CD4-positive, alpha-beta memory T cell (primary cell): ENCODE measurements at regions of chr11 and their contacts with region 1.

Region 1: DNA sequence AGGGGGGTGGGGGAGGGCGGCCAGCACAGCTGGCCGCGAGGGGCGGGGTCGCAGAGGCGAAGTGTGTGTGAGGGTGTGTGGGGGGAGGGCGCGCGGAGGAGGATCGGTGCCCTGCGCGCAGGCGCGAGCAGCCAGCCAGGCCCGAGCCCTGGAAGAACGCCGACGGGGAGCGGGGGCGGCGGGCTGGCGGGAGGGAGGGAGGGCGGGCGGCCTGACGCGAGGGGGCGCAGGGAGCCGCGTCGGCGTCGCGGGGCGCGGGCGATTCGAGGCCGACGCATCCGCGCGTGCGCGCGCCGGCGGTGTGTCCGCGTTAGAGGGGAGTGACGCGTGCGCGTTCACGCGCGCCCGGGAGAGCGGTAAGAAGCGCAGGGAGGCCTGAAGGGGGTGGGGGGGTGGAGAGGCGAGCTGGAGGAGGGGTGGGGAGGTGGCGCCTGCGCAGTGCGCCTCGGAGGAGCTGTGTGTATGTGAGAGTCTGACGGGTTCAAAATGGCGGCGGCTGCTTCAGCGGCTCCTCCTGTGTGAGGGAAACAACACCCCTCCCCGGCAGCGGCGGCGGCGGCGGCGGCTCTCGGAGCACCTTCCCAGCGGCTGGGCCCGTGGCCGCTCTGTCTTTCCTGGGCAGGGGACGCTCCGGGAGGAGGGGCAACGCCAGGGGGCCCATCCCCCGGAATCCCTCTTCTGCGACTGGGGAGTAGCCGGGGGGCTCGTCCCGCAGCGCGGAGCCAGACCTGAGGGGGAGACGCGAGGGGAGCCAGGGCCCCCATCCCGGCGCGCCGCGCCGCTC is at the start of gene KDM2A:
- DNase-seq: peak; percentile 96 to 100 (median 98)
- H3K4me3 ChIP-seq: peak within 1 kb of the TSS; percentile 60 to 97
- H3K4me3 Mint-ChIP-seq: peak within 1 kb of the TSS; percentile 94 to 99 (median 97)
- H3K27ac ChIP-seq: peak within 1 kb of the TSS; percentile 76
- H3K27ac Mint-ChIP-seq: peak within 1 kb of the TSS; percentile 89 to 98 (median 96)
- H3K4me1 ChIP-seq: peaks cover 31% of the 10 kb centered on the region
- H3K4me1 Mint-ChIP-seq: peaks cover 13 to 40% (median 27%) of the 10 kb centered on the region in 4 donors
- H3K27me3 ChIP-seq: no peaks in the 10 kb centered on the region
- H3K27me3 Mint-ChIP-seq: no peaks in the 10 kb centered on the region
- total RNA-seq, gene KDM2A: 193 to 200 TPM

Region 2: GRCh38 chr11:66251809-66252208 is 867.2 kb before region 1 on chr11:
- CTCF ChIA-PET with region 1: no interaction called
- POLR2A ChIA-PET with region 1: no interaction called
- intact Hi-C with region 1: no loop called
- DNase-seq: no peak
- H3K4me3 ChIP-seq: no peak overlapping the region
- H3K4me3 Mint-ChIP-seq: peak overlapping the region in 1 of 8 donors; percentile 39
- H3K27ac ChIP-seq: no peak overlapping the region
- H3K27ac Mint-ChIP-seq: peak overlapping the region in 4 of 7 donors; percentile 29 to 58 (median 46)
- H3K4me1 ChIP-seq: peaks cover 10% of the 10 kb centered on the region
- H3K4me1 Mint-ChIP-seq: peaks cover 10 to 31% (median 20%) of the 10 kb centered on the region in 4 donors
- H3K27me3 ChIP-seq: no peaks in the 10 kb centered on the region
- H3K27me3 Mint-ChIP-seq: no peaks in the 10 kb centered on the region

Region 3: DNA sequence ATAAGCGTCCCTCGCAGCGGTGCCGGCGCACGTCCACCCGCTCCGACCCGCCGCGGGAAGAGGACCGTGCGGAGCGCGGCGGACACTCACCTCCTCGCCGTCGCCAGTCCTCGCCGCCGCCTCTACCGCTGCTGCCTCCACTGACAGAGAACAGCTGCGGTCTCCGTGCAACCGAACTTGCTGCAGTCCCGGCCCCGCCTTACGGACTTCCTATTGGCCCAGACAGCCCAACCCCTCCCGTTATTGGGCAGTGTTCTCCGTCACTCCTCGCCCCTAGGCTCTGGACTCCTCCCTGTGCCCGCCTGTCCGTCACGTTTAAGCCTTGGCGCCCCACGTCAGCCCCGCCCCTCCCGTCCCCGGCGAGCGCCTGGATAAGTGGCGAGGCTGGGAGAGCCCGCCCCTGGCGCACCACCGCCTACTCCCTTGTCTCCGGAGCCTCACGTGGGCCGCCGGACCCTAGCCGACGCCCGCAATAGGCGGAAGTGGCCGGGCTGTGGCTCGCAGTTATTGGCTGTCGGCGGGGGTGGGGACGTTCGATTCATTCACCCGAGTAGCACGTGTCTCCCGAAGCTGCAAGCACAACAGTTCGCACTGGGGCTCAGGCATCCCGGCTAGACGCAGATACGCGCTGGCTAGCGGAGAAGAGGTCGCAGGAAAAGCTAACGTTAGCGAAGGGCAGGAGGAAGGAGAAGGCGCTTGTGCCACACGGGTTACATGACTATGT is 160.6 kb before region 1 on chr11 and contains the start of gene PC:
- CTCF ChIA-PET with region 1: no interaction called
- POLR2A ChIA-PET with region 1: interaction called, 3 read pairs
- intact Hi-C with region 1: loop called (anchors 5 kb)
- DNase-seq: peak; percentile 96 to 99 (median 98)
- H3K4me3 ChIP-seq: peak within 1 kb of the TSS; percentile 76 to 77
- H3K4me3 Mint-ChIP-seq: peak within 1 kb of the TSS; percentile 87 to 93 (median 92)
- H3K27ac ChIP-seq: peak within 1 kb of the TSS; percentile 19
- H3K27ac Mint-ChIP-seq: peak within 1 kb of the TSS; percentile 56 to 94 (median 88)
- H3K4me1 ChIP-seq: peaks cover 21% of the 10 kb centered on the region
- H3K4me1 Mint-ChIP-seq: peaks cover 15 to 38% (median 16%) of the 10 kb centered on the region in 4 donors
- H3K27me3 ChIP-seq: no peaks in the 10 kb centered on the region
- H3K27me3 Mint-ChIP-seq: peaks cover 0 to 1% of the 10 kb centered on the region in 2 donors
- total RNA-seq, gene PC: 7.6 to 7.7 TPM

Region 4: DNA sequence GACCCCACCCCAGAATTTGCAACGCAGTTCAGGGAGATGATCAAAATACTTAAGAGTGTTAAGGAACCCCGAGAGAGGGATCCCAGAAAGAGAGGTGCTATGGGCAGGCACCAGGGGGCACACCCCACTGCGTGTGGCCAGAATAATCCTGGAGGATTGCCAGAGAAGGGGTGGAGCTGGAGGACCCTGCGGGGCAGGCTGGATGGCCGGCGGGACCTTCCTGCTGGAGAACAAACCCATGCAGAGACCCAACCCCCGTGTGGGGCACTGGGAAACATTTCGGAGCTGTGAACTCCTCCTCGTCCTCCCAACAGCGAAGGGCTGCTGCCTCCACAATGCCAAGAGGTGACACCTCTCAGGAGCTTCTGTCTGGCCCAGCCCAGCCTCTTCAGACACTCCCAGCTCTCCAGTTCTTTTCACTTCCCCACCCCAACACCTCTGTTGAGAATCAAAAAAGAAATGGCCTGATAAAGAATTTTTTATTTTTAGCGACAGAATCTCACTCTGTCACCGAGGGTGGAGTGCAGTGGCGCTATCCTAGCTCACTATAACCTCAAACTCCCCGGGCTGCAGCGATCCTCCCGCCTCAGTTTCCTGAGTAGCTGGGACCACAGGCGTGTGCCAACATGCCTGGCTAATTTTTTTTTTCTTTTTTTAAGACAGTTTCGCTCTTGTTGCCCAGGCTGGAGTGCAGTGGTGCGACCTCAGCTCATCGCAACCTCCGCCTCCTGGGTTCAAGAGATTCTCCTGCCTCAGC is 36.8 kb before region 1 on chr11:
- CTCF ChIA-PET with region 1: interaction called, 6 read pairs
- POLR2A ChIA-PET with region 1: no interaction called
- intact Hi-C with region 1: loop called (anchors 1 kb)
- DNase-seq: no peak
- H3K4me3 ChIP-seq: no peak overlapping the region
- H3K4me3 Mint-ChIP-seq: peak overlapping the region in 3 of 8 donors; percentile 29 to 62 (median 40)
- H3K27ac ChIP-seq: no peak overlapping the region
- H3K27ac Mint-ChIP-seq: peak overlapping the region in 1 of 7 donors; percentile 39
- H3K4me1 ChIP-seq: peaks cover 11% of the 10 kb centered on the region
- H3K4me1 Mint-ChIP-seq: peaks cover 0 to 11% (median 3%) of the 10 kb centered on the region in 4 donors
- H3K27me3 ChIP-seq: no peaks in the 10 kb centered on the region
- H3K27me3 Mint-ChIP-seq: peaks cover 2 to 5% of the 10 kb centered on the region in 2 donors

Region 5: GRCh38 chr11:67178878-67179277 is 59.9 kb after region 1 on chr11:
- CTCF ChIA-PET with region 1: no interaction called
- POLR2A ChIA-PET with region 1: no interaction called
- intact Hi-C with region 1: no loop called
- DNase-seq: no peak
- H3K4me3 ChIP-seq: no peak overlapping the region
- H3K4me3 Mint-ChIP-seq: no peak overlapping the region
- H3K27ac ChIP-seq: no peak overlapping the region
- H3K27ac Mint-ChIP-seq: peak overlapping the region in 1 of 7 donors; percentile 12
- H3K4me1 ChIP-seq: peaks cover 8% of the 10 kb centered on the region
- H3K4me1 Mint-ChIP-seq: peaks cover 16 to 28% (median 22%) of the 10 kb centered on the region in 4 donors
- H3K27me3 ChIP-seq: no peaks in the 10 kb centered on the region
- H3K27me3 Mint-ChIP-seq: no peaks in the 10 kb centered on the region

Region 6: GRCh38 chr11:67195971-67196456 is 77.0 kb after region 1 on chr11:
- CTCF ChIA-PET with region 1: no interaction called
- POLR2A ChIA-PET with region 1: no interaction called
- intact Hi-C with region 1: no loop called
- DNase-seq: no peak
- H3K4me3 ChIP-seq: no peak overlapping the region
- H3K4me3 Mint-ChIP-seq: no peak overlapping the region
- H3K27ac ChIP-seq: no peak overlapping the region
- H3K27ac Mint-ChIP-seq: peak overlapping the region in 1 of 7 donors; percentile 55
- H3K4me1 ChIP-seq: no peaks in the 10 kb centered on the region
- H3K4me1 Mint-ChIP-seq: peaks cover 0 to 8% (median under 1%) of the 10 kb centered on the region in 4 donors
- H3K27me3 ChIP-seq: no peaks in the 10 kb centered on the region
- H3K27me3 Mint-ChIP-seq: no peaks in the 10 kb centered on the region

Region 7: DNA sequence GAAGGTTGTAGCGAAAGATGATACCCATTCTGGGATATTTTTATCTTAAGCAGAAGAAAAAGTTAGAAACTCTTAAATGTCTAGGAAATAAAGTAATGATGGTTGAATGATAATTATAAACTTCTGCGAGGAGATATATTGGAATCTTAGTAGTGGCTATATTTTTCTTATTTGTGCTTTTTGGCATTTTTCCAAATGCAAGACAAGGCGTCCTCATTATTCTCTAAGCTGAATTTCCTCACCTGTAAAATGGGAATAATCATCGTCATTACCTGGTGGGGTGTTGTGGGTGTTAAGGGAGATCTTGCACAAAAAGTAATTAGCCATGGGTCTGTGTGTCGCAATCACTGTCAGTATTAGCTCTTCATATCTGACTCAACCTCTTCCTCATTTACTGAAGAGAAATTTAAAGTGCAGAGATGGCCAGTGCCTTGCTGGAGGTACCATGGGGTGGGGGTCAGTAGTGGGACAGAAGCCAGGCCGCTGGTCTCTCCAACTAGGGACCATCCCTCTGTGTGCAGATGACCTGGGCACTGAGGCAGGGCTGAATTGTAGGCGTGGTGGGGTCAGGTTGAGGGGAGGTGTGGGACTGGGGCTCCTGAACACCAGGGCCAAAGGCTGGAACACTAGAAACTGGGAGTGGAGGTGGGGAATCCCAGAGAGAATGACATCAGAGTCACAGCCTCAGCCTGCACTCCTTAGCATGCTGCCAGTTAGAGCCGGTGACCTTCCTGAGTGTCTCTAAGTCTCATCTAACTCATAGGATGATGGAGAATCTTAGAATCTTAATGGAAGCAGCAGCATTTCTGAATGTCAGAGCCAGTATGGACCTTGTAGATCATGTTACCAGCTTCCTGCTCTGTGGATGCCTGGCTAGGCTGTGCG is 382.1 kb after region 1 on chr11:
- CTCF ChIA-PET with region 1: no interaction called
- POLR2A ChIA-PET with region 1: no interaction called
- intact Hi-C with region 1: no loop called
- DNase-seq: no peak
- H3K4me3 ChIP-seq: no peak overlapping the region
- H3K4me3 Mint-ChIP-seq: peak overlapping the region in 2 of 8 donors; percentile 30 to 64
- H3K27ac ChIP-seq: peak overlapping the region; percentile 17
- H3K27ac Mint-ChIP-seq: peak overlapping the region in 6 of 7 donors; percentile 26 to 87 (median 66)
- H3K4me1 ChIP-seq: peaks cover 36% of the 10 kb centered on the region
- H3K4me1 Mint-ChIP-seq: peaks cover 16 to 37% (median 25%) of the 10 kb centered on the region in 4 donors
- H3K27me3 ChIP-seq: no peaks in the 10 kb centered on the region
- H3K27me3 Mint-ChIP-seq: no peaks in the 10 kb centered on the region